ENCODE measurements at regions of chr14 and their contacts with region 1.

Region 1: GRCh38 chr14:60184146-60184904 is 19.1 kb upstream of the DHRS7 start:
- DNase-seq: peak; percentile 74
- H3K4me3 ChIP-seq: peak overlapping the region; percentile 15 to 67 (median 22)
- H3K27ac ChIP-seq: no peak overlapping the region
- H3K4me1 ChIP-seq: no peaks in the 10 kb centered on the region
- H3K27me3 ChIP-seq: peaks cover 0 to 8% of the 10 kb centered on the region in 2 experiments
- CTCF ChIP-seq: peak; percentile 34 to 45
- POLR2A ChIP-seq: no peak

Region 2: DNA sequence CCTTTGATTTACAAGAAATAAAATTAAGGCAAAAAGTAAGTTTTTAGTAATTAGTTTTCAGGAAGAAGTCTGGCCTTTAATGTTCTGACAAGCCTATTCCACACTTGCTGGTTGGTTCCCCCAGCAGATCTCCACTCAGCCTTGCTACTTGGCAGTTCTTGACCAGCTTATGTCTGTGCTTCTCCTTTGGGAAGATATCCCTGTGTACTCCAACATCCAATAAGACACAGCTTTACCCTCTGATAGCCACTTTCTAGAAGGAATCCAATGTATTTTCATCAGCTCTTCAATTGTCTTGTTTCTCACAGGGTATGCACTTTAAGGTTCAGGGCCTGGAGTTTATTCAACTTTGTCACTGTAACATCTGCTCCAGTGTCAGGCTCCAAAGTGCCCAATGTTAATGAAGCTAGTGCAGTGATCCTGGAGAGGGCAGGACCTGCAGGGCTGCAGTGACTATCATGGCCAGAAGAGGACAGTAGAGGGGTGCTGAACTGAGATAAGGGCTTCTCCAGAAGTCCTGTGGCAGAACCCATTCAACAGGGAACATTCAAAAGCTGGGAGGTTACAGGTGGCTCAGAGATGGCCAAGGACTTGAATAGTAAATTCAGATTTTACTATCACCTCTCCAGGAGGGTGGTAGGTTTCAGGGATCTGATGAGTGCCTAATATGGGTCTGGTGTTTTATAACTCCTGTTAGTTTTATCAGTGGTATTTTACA is 677.1 kb before region 1 on chr14:
- CTCF ChIA-PET with region 1: interaction called, 13 read pairs
- POLR2A ChIA-PET with region 1: no interaction called
- dilution Hi-C with region 1: no loop called
- intact Hi-C with region 1: no loop called
- DNase-seq: peak; percentile 47
- H3K4me3 ChIP-seq: no peak overlapping the region
- H3K27ac ChIP-seq: no peak overlapping the region
- H3K4me1 ChIP-seq: no peaks in the 10 kb centered on the region
- H3K27me3 ChIP-seq: peaks cover 0 to 7% of the 10 kb centered on the region in 2 experiments
- CTCF ChIP-seq: peak; percentile 75 to 83
- POLR2A ChIP-seq: no peak

Region 3: GRCh38 chr14:59707778-59708561 is 476.4 kb before region 1 on chr14:
- CTCF ChIA-PET with region 1: interaction called, 13 read pairs
- POLR2A ChIA-PET with region 1: no interaction called
- dilution Hi-C with region 1: no loop called
- intact Hi-C with region 1: no loop called
- DNase-seq: no peak
- H3K4me3 ChIP-seq: no peak overlapping the region
- H3K27ac ChIP-seq: no peak overlapping the region
- H3K4me1 ChIP-seq: no peaks in the 10 kb centered on the region
- H3K27me3 ChIP-seq: peaks cover 2 to 22% of the 10 kb centered on the region in 2 experiments
- CTCF ChIP-seq: no peak
- POLR2A ChIP-seq: no peak

Region 4: GRCh38 chr14:60064491-60065072 is 119.7 kb before region 1 on chr14:
- CTCF ChIA-PET with region 1: interaction called, 142 read pairs
- POLR2A ChIA-PET with region 1: no interaction called
- dilution Hi-C with region 1: no loop called
- intact Hi-C with region 1: loop called (anchors 1 kb)
- DNase-seq: peak; percentile 48
- H3K4me3 ChIP-seq: no peak overlapping the region
- H3K27ac ChIP-seq: no peak overlapping the region
- H3K4me1 ChIP-seq: no peaks in the 10 kb centered on the region
- H3K27me3 ChIP-seq: peaks cover 0 to 2% of the 10 kb centered on the region in 2 experiments
- CTCF ChIP-seq: peak; percentile 18 to 25
- POLR2A ChIP-seq: no peak

Region 5: DNA sequence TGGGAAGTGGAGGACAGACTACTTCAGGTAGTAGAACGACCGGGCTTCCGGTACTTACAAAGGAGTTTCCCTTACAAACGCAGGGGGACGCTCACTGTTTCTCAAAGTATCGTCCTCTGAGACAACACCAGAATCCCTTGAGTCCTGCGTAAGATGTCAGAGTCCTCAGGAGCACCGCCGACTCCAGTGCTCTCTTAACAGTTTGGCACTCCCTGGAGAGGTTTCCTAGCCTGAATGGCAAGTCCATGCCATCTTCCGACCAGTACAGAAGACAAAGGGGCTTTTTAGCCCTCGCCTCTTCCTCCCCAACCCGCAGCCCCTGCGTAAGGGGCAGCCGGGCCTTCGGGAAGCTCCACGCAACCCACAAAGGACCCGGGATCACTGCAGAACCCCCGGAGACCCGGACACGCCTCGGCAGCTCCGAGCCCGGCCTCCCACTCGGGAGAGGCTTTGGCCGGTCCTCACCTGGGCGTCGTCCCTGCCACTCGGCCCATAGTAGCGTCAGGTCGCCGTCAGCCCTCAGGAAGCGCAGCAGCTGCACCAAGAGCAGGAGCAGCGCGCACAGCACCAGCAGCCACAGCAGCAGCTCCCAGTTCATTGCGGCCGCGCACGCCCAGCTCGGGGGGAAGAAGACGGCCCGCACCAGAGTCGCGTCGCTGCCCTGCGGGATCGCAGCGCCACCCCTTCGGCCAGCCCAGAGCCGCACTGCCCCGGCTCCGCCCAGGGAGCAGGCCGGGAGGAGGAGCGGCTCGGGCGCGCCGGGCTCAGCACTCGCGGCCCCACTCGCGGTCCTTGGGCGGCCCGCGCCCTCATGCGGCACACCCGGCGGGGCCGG is 19.4 kb before region 1 on chr14 and contains the start of gene DHRS7:
- CTCF ChIA-PET with region 1: interaction called, 20 read pairs
- POLR2A ChIA-PET with region 1: no interaction called
- dilution Hi-C with region 1: no loop called
- intact Hi-C with region 1: loop called (anchors 1 kb)
- DNase-seq: peak; percentile 82
- H3K4me3 ChIP-seq: peak within 1 kb of the TSS; percentile 46 to 84 (median 79)
- H3K27ac ChIP-seq: peak within 1 kb of the TSS; percentile 22
- H3K4me1 ChIP-seq: peaks cover 10% of the 10 kb centered on the region
- H3K27me3 ChIP-seq: no peaks in the 10 kb centered on the region
- CTCF ChIP-seq: peak; percentile 12 to 21
- POLR2A ChIP-seq: peak; percentile 59
- total RNA-seq, gene DHRS7: 29.3 and 35.7 TPM in 2 replicates

Region 6: DNA sequence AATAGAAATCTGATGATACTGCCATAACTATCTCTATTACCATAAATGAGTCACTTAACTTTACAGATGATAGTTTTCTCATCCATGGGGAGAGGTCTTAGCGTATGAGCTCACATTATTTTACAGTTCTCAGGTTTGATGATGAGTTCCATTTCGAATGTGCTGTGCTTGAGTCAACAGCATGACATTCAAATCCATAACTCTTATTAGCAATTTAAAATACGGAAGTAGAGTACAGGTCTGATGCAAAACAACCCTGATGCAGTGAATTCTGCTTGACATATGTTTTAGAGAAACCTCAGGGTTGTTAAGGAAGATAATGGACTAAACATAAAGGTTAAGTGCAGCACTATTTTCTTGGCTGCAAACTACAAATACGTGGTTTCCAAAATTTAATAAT is 271.6 kb after region 1 on chr14:
- CTCF ChIA-PET with region 1: no interaction called
- POLR2A ChIA-PET with region 1: no interaction called
- dilution Hi-C with region 1: no loop called
- intact Hi-C with region 1: no loop called
- DNase-seq: no peak
- H3K4me3 ChIP-seq: no peak overlapping the region
- H3K27ac ChIP-seq: no peak overlapping the region
- H3K4me1 ChIP-seq: no peaks in the 10 kb centered on the region
- H3K27me3 ChIP-seq: peaks cover 0 to 11% of the 10 kb centered on the region in 2 experiments
- CTCF ChIP-seq: no peak
- POLR2A ChIP-seq: no peak

Region 7: DNA sequence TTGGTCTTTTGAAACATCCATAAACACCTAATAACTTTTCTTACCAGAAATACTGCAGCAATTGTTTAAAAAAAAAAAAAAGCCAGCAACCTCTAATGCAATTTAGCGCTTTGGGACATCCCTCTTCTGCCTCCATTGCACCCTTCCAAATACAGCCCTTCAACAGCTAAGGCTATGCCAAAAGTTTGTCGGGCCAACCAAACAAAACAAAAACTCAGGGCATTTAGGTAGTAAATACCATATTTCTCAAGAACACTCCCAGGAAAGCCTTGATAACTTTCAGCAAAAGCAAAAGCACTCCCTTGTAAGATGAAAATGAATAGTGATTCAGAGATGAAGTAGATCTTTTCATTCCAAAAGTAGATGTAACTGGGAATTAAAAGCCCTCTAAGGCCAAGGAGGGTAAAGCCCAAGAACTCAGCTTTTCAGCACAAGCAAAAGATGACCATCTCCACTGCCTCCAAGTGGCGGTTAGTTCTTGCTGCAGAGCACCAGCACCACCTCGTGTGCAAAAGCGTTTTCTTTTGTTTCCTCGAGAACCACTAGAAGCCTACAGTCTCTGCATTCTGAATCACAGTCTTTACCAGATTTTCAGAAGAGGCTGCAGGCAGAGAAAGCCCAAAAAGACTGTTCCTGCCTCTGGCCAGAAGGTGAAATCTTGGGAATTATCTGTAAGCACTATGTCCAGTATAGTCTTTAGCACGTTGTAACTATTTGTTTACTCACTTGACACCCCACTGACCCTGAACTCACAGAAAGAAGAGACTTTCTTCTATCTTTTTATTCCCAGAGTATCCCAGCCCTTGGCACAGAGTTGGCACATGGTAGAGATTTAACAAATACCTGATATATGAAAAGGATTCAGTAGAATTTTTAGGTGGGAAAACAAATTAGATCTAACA is 377.8 kb after region 1 on chr14:
- CTCF ChIA-PET with region 1: interaction called, 10 read pairs
- POLR2A ChIA-PET with region 1: no interaction called
- dilution Hi-C with region 1: no loop called
- intact Hi-C with region 1: loop called (anchors 2 kb)
- DNase-seq: peak; percentile 59
- H3K4me3 ChIP-seq: no peak overlapping the region
- H3K27ac ChIP-seq: no peak overlapping the region
- H3K4me1 ChIP-seq: no peaks in the 10 kb centered on the region
- H3K27me3 ChIP-seq: peaks cover 0 to 8% of the 10 kb centered on the region in 2 experiments
- CTCF ChIP-seq: peak; percentile 45 to 70
- POLR2A ChIP-seq: no peak

Measured in endothelial cell of umbilical vein (primary cell).